BJ (cell line): ENCODE measurements at regions of chr6 and their contacts with region 1.

Region 1: DNA sequence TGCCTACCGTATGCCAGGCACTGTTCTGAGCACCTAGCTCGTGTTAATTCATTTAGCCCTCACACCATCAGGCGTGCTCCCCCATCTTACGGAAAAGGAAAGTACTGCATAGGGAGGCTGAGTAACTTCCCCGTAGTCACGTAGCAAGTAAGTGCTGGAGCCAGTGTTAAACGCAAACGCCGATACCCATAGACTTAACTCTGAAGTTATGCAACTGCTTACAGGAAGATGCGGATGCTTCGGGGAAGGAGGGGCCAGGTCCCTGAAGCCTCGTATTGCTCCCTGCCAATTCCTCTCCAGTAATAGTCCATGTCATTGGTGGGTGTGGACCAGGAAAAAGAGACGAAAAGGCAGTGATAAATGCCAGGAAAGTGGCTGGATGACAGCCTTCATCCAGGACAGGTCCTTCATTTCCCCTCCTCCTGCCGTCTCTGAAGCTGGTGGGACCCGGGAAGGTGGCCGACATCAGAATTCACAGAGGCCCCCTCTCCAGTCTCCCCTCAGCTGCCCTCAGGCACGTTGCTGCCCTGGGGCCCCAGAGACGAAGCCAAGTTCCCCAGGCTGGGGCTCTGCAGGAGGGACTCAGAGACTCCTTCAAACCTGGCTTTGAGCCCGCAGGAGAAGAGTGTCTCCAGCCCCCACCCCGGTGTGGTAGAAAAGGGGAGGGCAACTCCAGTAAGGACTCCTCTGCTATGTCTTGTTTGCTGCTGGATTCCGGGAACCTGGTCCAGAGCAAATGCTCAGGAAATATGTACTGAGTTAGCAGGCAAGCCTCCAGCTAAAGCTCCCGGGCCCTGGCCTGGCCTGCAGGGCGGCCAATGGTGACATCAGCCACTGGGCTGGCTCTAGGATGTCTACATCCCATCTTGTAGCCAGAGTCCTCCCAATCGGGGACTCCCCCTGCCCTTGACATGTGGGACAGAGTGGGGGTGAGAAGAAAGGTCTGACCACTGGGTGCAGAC is 37.8 kb downstream of the RAB44 start:
- DNase-seq: peak; percentile 52
- H3K4me3 ChIP-seq: peak overlapping the region; percentile 8; the same call in 1 of the 2 replicates
- H3K27me3 ChIP-seq: no peaks in the 10 kb centered on the region
- CTCF ChIP-seq: peak; percentile 38

Region 2: GRCh38 chr6:36570264-36570663 is 165.1 kb before region 1 on chr6:
- CTCF ChIA-PET with region 1: no interaction called
- POLR2A ChIA-PET with region 1: no interaction called
- DNase-seq: no peak
- H3K4me3 ChIP-seq: no peak overlapping the region
- H3K27me3 ChIP-seq: no peaks in the 10 kb centered on the region
- CTCF ChIP-seq: no peak

Region 3: DNA sequence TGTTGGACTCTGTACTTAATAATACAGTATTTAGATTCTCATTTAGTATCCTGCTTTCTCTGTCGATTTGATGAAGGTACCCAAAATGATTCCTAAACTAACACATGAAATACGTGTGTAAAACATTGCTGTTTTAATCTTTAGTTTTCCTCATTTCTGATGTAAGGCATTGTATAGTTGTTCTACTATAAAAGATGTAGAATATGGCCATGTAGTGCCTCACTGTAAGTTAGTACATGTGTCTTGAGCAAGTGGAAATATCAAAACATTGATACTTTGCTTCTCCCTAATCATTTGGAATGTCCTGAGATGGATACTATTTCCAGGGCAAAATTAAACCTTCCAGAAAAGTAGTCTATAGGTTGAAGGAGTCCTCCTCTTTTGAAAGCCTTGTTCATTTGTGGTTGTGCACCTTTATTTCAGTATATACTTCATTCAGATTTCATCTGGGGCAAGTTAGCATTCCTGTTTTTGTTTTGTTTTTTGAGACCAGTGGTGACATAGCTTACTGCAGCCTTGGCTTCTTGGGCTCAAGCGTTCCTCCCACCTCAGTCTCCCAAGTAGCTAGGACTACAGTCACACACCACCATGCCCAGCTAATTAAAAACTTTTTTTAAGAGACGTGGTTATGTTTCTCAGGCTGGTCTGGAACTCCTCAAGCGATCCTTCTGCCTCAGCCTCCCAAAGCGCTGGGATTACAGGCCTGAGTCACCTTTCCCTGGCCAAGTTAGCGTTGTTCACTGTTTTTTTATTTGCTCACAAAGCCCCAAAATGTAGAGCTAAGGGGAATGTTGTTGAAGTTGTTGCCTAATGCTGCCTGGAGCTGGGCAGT is 129.6 kb before region 1 on chr6:
- CTCF ChIA-PET with region 1: no interaction called
- POLR2A ChIA-PET with region 1: interaction called, 11 read pairs
- DNase-seq: no peak
- H3K4me3 ChIP-seq: no peak overlapping the region
- H3K27me3 ChIP-seq: no peaks in the 10 kb centered on the region
- CTCF ChIP-seq: peak; percentile 14; the same call in 1 of the 2 replicates

Region 4: GRCh38 chr6:36724514-36725390 is 10.6 kb before region 1 on chr6:
- CTCF ChIA-PET with region 1: interaction called, 12 read pairs
- POLR2A ChIA-PET with region 1: no interaction called
- DNase-seq: no peak
- H3K4me3 ChIP-seq: no peak overlapping the region
- H3K27me3 ChIP-seq: no peaks in the 10 kb centered on the region; the same call in none of the 2 replicates
- CTCF ChIP-seq: peak; percentile 70

Region 5: GRCh38 chr6:36759148-36759759 is 23.9 kb after region 1 on chr6:
- CTCF ChIA-PET with region 1: interaction called, 20 read pairs
- POLR2A ChIA-PET with region 1: no interaction called
- DNase-seq: no peak
- H3K4me3 ChIP-seq: no peak overlapping the region
- H3K27me3 ChIP-seq: peaks cover 2% of the 10 kb centered on the region
- CTCF ChIP-seq: peak; percentile 100